Activated CD8-positive, alpha-beta T cell treated with anti-CD3 and anti-CD28 coated beads, Interleukin-2, amount 10 ng/mL, durations not matched to agents 7 days and 5 days (primary cell): ENCODE measurements at regions of chr11 and their contacts with region 1.

Region 1: DNA sequence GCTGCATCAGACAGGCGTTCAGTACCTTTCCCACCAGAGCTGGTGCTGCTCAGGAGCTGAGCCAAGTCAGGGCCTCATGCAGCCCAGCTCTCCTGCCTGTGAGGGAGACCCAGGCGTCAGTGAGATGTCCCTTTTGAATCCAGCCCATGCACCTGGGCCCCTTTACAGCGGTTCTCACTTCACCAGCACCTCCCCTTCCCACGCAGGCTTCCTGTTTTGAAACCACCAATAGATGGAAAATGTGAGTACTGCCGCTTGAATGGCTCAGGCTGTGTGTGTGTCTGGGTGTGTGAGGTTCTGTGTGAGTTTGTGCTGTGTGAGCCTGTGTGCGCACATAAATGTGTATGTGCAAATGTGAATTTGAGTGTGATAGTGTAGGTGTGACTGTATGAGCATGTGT is 88.4 kb downstream of the UBASH3B start:
- DNase-seq: peak; percentile 88
- ATAC-seq: peak; percentile 83
- H3K4me3 Mint-ChIP-seq: no peak overlapping the region
- H3K27ac Mint-ChIP-seq: no peak overlapping the region
- H3K4me1 Mint-ChIP-seq: peaks cover 18% of the 10 kb centered on the region
- H3K27me3 Mint-ChIP-seq: no peaks in the 10 kb centered on the region

Region 2: GRCh38 chr11:122717264-122717867 is 26.6 kb before region 1 on chr11:
- CTCF ChIA-PET with region 1: interaction called, 15 read pairs
- POLR2A ChIA-PET with region 1: interaction called, 16 read pairs
- DNase-seq: peak; percentile 93
- ATAC-seq: peak; percentile 88
- H3K4me3 Mint-ChIP-seq: peak overlapping the region; percentile 67
- H3K27ac Mint-ChIP-seq: peak overlapping the region; percentile 96
- H3K4me1 Mint-ChIP-seq: peaks cover 95% of the 10 kb centered on the region
- H3K27me3 Mint-ChIP-seq: no peaks in the 10 kb centered on the region

Region 3: DNA sequence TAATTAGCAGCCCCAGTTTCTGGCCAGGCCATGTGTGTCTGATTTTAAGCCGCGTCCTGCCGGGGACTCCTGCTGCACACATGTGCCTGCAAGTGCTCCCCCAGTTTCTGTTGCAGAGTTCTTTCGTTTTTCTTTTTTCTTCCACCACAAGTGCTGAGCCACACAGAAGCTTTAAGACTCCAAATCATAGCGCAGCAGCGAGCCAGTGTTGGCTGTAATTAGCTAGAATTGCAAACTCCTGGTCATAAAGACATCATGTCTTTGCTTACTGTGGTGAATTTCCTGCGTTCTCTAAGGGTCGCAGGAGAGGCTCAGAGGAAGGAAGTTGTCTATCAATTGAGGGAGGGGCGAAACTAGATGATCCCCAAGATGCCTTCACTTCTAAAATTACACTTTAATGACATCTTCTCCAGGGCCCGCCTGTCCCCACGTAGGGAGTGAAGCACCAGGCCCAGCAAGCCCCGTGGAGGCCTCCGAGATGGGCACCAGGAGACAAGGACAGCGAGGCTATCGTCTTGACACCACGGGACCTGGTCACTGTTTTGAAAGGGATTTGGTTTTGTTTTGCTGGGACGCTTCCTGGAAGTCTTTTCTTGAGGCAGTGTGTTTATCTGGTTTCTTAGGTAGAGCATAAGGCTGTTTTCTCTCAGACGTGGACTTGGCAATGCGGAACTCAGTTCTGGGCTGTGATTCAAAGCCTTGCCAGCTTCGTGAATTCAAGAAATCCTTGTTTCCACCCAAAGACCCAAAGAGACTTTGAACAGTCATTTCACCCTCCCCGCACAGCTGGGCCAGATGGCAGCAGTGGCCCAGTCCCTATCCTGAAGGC is 16.6 kb before region 1 on chr11:
- CTCF ChIA-PET with region 1: interaction called, 56 read pairs
- POLR2A ChIA-PET with region 1: interaction called, 31 read pairs
- DNase-seq: peak; percentile 70
- ATAC-seq: peak; percentile 69
- H3K4me3 Mint-ChIP-seq: peak overlapping the region; percentile 68
- H3K27ac Mint-ChIP-seq: peak overlapping the region; percentile 96
- H3K4me1 Mint-ChIP-seq: peaks cover 73% of the 10 kb centered on the region
- H3K27me3 Mint-ChIP-seq: no peaks in the 10 kb centered on the region

Region 4: GRCh38 chr11:122733318-122733717 is 10.6 kb before region 1 on chr11:
- CTCF ChIA-PET with region 1: interaction called, 56 read pairs
- POLR2A ChIA-PET with region 1: interaction called, 31 read pairs
- DNase-seq: no peak
- ATAC-seq: no peak
- H3K4me3 Mint-ChIP-seq: no peak overlapping the region
- H3K27ac Mint-ChIP-seq: no peak overlapping the region
- H3K4me1 Mint-ChIP-seq: peaks cover 16% of the 10 kb centered on the region
- H3K27me3 Mint-ChIP-seq: no peaks in the 10 kb centered on the region